GM12878 (cell line): ENCODE measurements at regions of chr20 and their contacts with region 1.

Region 1: DNA sequence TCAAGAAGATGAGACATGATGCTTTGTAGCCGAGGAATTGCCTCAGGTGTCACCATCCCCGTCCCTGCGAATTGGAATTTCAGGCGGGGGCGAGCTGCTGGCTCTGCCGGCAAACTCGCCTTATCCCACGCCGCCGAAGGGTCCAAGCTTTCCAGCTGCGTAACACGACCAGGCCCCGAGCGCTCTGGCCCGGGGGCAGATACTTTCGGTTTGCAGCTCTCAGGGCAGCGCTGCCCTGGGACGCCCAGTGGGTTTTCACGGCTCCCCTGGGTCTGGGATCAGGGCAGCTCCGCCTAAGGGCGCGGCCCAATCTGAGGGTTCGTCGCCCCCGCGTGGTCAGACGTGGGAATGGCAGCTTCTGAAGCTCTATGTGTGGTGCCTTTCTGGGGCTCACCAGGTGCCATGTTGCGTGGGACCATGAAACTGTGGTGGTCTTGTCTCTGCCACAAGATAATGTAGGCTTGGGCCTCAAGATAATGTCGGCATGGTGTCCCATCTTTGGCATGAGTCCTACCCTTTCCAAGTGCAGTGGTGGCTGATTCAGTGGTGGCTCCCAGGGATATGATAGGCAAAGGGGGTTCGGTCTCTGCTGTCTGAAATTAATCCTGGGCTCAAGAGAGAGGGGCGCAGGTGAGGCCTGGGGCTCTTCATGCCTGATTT is 20.9 kb downstream of the PIGT start:
- DNase-seq: no peak
- ATAC-seq: peak; percentile 97
- H3K4me3 ChIP-seq: peak overlapping the region; percentile 39; the same call in 1 of the 2 replicates
- H3K27ac ChIP-seq: no peak overlapping the region
- H3K4me1 ChIP-seq: peaks cover 16% of the 10 kb centered on the region
- H3K27me3 ChIP-seq: no peaks in the 10 kb centered on the region
- CTCF ChIP-seq: peak; percentile 96 to 97 (median 96)
- EP300 ChIP-seq: no peak
- POLR2A ChIP-seq: no peak
- RAD21 ChIP-seq: peak; percentile 94

Region 2: GRCh38 chr20:45293041-45294002 is 143.5 kb before region 1 on chr20:
- CTCF ChIA-PET with region 1: interaction called, 15 read pairs
- POLR2A ChIA-PET with region 1: no interaction called
- RAD21 ChIA-PET with region 1: interaction called, 4 read pairs
- SMC1A ChIA-PET with region 1: interaction called, 6 read pairs
- in situ Hi-C with region 1: no loop called
- intact Hi-C with region 1: no loop called
- DNase-seq: no peak
- ATAC-seq: peak; percentile 93
- H3K4me3 ChIP-seq: peak overlapping the region; percentile 30; the same call in 1 of the 2 replicates
- H3K27ac ChIP-seq: no peak overlapping the region
- H3K4me1 ChIP-seq: no peaks in the 10 kb centered on the region
- H3K27me3 ChIP-seq: peaks cover 6 to 7% of the 10 kb centered on the region in 2 experiments; a peak in 3 of 4 replicates
- CTCF ChIP-seq: peak; percentile 83 to 96 (median 89)
- EP300 ChIP-seq: no peak
- POLR2A ChIP-seq: no peak
- RAD21 ChIP-seq: peak; percentile 25; the same call in 1 of the 2 replicates

Region 3: DNA sequence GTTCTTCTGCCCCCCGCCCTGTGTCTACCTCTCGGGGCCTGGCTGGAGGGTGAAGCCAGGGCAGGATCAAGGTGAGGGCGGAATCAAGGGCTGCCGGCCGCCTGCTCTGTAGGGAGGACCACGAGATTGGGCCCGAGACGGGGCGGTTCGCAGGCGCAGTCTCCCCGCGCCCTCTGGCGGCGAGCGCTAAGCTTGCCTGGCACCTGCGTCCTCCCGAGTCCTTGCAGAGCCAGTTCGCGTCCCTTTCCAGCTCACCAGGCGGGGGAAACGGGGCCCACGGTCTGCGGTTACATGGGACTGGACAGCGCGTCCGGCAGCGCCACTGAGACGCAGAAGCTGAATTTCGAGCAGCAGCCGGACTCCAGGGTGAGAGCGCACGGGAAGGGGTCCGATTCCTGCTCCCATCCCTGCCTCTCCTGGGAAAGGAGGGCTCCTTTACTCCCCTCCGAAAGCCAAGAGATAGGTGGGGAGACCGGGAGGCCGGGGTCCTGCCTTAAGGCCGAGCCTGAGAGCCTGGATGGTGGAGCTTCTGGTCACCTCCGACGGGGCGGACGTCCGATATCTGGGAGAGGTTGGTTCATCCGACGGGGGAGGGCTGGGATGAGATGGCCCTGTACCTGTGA is 125.2 kb before region 1 on chr20:
- CTCF ChIA-PET with region 1: interaction called, 121 read pairs
- POLR2A ChIA-PET with region 1: no interaction called
- RAD21 ChIA-PET with region 1: interaction called, 5 read pairs
- SMC1A ChIA-PET with region 1: interaction called, 4 read pairs
- in situ Hi-C with region 1: no loop called
- intact Hi-C with region 1: no loop called
- DNase-seq: no peak
- ATAC-seq: peak; percentile 93
- H3K4me3 ChIP-seq: no peak overlapping the region
- H3K27ac ChIP-seq: no peak overlapping the region
- H3K4me1 ChIP-seq: no peaks in the 10 kb centered on the region
- H3K27me3 ChIP-seq: peaks cover 6 to 8% of the 10 kb centered on the region in 2 experiments; a peak in 3 of 4 replicates
- CTCF ChIP-seq: peak; percentile 78 to 85 (median 84)
- EP300 ChIP-seq: no peak
- POLR2A ChIP-seq: no peak
- RAD21 ChIP-seq: peak; percentile 44

Region 4: DNA sequence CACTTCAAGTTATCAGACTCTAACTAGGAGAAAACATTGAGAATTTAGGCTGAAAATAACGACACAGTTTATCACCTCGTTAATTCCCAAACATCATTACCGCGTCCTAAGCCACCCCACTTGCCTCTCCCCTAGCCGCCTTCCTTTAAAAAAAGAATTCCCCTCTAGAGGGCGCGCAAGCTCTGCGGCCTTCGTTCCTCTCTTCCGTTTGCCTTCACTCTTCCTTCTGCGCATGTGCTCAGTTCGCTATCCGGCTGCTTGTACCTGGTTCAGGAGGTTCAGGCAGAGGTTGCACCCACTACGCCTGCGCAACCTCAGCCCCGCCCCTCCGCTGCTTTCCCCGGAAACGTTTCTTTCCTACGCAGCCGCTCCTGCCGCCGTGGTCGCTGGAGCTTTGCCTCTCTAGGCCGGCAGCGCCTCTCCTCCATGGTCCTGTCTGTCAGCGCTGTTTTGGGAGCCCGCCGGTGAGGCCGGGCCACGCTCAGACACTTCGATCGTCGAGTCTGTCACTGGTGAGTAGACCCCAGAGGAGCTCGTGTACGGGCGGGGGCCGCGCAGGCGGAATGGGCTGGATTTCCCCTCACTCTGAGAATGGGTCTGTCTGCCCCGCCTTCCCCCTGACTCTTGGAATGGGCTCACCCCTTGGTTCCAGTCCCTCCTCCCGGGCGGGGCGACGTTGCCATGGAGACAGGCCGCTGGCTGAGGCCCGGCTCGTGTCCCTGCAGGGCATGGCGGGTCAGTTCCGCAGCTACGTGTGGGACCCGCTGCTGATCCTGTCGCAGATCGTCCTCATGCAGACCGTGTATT is 73.9 kb before region 1 on chr20 and contains the start of gene SYS1:
- CTCF ChIA-PET with region 1: interaction called, 685 read pairs
- POLR2A ChIA-PET with region 1: interaction called, 12 read pairs
- RAD21 ChIA-PET with region 1: interaction called, 394 read pairs
- SMC1A ChIA-PET with region 1: interaction called, 440 read pairs
- in situ Hi-C with region 1: no loop called
- intact Hi-C with region 1: loop called (anchors 1 kb)
- DNase-seq: peak; percentile 94
- ATAC-seq: peak; percentile 85
- H3K4me3 ChIP-seq: peak within 1 kb of the TSS; percentile 62
- H3K27ac ChIP-seq: peak within 1 kb of the TSS; percentile 92
- H3K4me1 ChIP-seq: peaks cover 39% of the 10 kb centered on the region
- H3K27me3 ChIP-seq: no peaks in the 10 kb centered on the region
- CTCF ChIP-seq: peak; percentile 85 to 99 (median 87); a peak in 5 of 6 replicates
- EP300 ChIP-seq: 0 out of 4 replicates have a peak, but pooled peaks of 1 of the 2 experiments have one; percentile 30
- POLR2A ChIP-seq: peak; percentile 94
- RAD21 ChIP-seq: peak; percentile 91
- polyA plus RNA-seq, gene SYS1: 5.1 to 7.3 TPM

Region 5: DNA sequence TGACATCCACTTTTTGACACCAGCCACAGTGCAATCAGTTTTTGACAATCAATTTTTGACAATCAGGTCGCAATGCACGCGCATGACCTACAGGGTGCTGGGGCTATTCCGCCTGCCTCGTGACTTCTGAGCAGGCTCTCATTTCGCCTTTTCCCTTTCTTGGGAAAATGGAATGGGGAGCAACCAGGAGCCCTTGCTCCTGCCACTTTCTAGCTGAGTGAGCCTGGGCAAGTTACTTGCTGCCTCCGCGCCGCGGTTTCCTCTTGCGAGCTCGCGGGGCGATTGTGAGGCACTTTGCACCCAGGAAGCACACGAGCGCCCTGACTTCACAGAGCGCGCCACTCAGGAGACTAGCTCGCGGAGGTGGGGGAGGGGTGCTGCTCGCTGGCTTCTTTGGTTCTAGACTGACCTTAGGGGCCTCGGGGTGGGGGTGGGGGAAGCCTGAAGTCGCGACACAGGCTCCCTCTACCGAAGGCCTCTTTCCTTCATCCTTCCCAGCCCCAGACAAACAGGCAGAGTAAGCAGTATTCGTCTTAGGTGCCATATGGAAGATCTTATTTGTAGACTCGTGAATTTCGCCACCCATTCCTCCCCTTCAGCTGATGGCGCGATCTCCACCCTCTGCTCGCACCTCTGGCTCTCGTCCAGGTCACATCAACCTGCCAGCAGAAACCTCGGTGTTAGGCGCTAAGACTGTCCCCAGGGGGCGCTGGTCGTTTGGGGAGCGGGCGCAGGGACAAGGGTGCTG is 63.3 kb before region 1 on chr20:
- CTCF ChIA-PET with region 1: interaction called, 685 read pairs
- POLR2A ChIA-PET with region 1: interaction called, 12 read pairs
- RAD21 ChIA-PET with region 1: interaction called, 394 read pairs
- SMC1A ChIA-PET with region 1: interaction called, 440 read pairs
- in situ Hi-C with region 1: loop called (anchors 5 kb)
- intact Hi-C with region 1: loop called (anchors 1 kb)
- DNase-seq: no peak
- ATAC-seq: peak; percentile 98
- H3K4me3 ChIP-seq: peak overlapping the region; percentile 59; the same call in 1 of the 2 replicates
- H3K27ac ChIP-seq: no peak overlapping the region
- H3K4me1 ChIP-seq: peaks cover 15% of the 10 kb centered on the region
- H3K27me3 ChIP-seq: no peaks in the 10 kb centered on the region
- CTCF ChIP-seq: peak; percentile 82 to 90 (median 89)
- EP300 ChIP-seq: no peak
- POLR2A ChIP-seq: no peak
- RAD21 ChIP-seq: peak; percentile 88

Region 6: GRCh38 chr20:45392733-45393132 is 44.1 kb before region 1 on chr20:
- CTCF ChIA-PET with region 1: interaction called, 16 read pairs
- POLR2A ChIA-PET with region 1: no interaction called
- RAD21 ChIA-PET with region 1: no interaction called
- SMC1A ChIA-PET with region 1: interaction called, 4 read pairs
- in situ Hi-C with region 1: no loop called
- intact Hi-C with region 1: no loop called
- DNase-seq: no peak
- ATAC-seq: no peak
- H3K4me3 ChIP-seq: no peak overlapping the region
- H3K27ac ChIP-seq: no peak overlapping the region
- H3K4me1 ChIP-seq: no peaks in the 10 kb centered on the region
- H3K27me3 ChIP-seq: no peaks in the 10 kb centered on the region
- CTCF ChIP-seq: no peak
- EP300 ChIP-seq: no peak
- POLR2A ChIP-seq: no peak
- RAD21 ChIP-seq: no peak

Region 7: DNA sequence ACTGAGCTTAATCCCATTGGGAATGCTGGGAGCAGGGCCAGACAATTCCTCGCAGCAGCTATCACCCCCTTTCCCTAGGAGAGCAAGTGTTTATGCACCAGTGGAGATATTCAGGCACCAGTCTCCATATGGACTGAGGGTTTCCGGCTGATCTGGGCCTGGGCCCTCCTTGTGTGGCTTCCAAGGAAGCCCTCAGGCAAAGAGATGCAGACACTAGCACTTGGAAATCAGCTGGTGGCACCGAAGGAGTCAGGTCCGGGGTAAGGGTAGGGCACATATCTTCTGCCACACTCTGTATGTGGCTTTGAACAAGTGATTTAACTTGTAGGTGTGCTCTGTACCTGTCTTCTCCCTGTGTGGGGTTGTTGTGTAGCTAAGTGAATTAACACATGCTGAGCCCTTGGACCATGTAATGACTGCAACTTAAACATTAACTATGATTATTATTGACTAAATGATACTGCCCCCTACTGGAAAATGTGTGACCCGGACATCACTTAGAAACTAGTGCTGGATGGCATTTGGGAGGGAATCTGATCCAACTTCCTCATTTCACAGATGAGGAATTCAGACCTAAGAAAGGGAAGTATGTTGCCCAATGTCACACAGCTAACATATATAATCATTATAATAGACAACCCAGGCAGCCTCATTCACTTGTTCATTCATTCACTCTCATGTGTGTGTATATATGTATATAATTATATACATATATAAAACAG is 13.4 kb after region 1 on chr20:
- CTCF ChIA-PET with region 1: interaction called, 86 read pairs
- POLR2A ChIA-PET with region 1: interaction called, 3 read pairs
- RAD21 ChIA-PET with region 1: interaction called, 8 read pairs
- SMC1A ChIA-PET with region 1: interaction called, 24 read pairs
- in situ Hi-C with region 1: no loop called
- intact Hi-C with region 1: no loop called
- DNase-seq: no peak
- ATAC-seq: peak; percentile 74
- H3K4me3 ChIP-seq: no peak overlapping the region
- H3K27ac ChIP-seq: no peak overlapping the region
- H3K4me1 ChIP-seq: no peaks in the 10 kb centered on the region
- H3K27me3 ChIP-seq: no peaks in the 10 kb centered on the region; a peak in 3 of 4 replicates
- CTCF ChIP-seq: peak; percentile 46 to 61 (median 60)
- EP300 ChIP-seq: no peak
- POLR2A ChIP-seq: no peak
- RAD21 ChIP-seq: peak; percentile 58

Region 8: GRCh38 chr20:45470262-45470931 is 33.5 kb after region 1 on chr20:
- CTCF ChIA-PET with region 1: no interaction called
- POLR2A ChIA-PET with region 1: no interaction called
- RAD21 ChIA-PET with region 1: no interaction called
- SMC1A ChIA-PET with region 1: no interaction called
- in situ Hi-C with region 1: no loop called
- intact Hi-C with region 1: no loop called
- DNase-seq: no peak
- ATAC-seq: peak; percentile 87
- H3K4me3 ChIP-seq: peak overlapping the region; percentile 12; the same call in 1 of the 2 replicates
- H3K27ac ChIP-seq: no peak overlapping the region
- H3K4me1 ChIP-seq: peaks cover 7% of the 10 kb centered on the region
- H3K27me3 ChIP-seq: peaks cover 7 to 27% of the 10 kb centered on the region in 2 experiments
- CTCF ChIP-seq: no peak
- EP300 ChIP-seq: no peak
- POLR2A ChIP-seq: no peak
- RAD21 ChIP-seq: no peak